AG04449 (cell line): ENCODE measurements at regions of chr11 and their contacts with region 1.

Region 1: DNA sequence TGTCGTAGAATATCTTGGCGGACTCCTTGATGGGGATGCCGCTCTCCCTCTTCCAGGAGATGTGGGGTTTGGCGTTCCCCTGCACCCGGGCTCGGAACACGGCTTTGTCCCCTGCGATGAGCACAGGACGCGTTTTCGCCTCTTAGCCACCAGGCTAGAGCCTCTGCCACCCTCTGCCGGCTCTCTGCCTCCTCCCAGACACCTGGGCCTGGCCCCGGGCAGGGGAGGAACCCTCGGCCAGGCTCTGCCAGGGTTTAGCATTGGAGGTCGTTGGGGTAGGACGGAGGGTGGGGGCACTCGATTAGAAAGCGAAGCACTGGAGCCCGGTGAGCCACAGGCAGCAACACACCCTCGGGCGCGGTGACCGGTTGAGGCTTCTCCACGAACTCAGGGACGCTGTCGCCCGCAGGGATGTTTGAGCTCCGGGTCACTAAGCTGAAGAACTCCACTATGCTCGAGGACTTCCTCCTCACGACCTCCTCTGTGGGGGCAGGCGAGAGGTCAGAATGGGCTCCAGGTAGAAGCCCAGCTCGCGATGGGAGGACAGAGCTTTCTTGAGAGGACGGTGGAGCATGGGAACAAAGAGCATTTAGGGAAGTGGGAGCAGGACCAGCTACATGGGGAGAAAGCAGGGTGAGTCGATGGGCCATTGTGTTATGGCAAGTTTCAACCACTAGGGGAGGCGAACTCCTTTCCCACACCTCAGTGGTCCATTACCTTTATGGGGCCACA is 4.3 kb downstream of the IGSF22 start:
- DNase-seq: no peak
- H3K4me3 ChIP-seq: peak overlapping the region; percentile 62
- CTCF ChIP-seq: peak; percentile 65

Region 2: DNA sequence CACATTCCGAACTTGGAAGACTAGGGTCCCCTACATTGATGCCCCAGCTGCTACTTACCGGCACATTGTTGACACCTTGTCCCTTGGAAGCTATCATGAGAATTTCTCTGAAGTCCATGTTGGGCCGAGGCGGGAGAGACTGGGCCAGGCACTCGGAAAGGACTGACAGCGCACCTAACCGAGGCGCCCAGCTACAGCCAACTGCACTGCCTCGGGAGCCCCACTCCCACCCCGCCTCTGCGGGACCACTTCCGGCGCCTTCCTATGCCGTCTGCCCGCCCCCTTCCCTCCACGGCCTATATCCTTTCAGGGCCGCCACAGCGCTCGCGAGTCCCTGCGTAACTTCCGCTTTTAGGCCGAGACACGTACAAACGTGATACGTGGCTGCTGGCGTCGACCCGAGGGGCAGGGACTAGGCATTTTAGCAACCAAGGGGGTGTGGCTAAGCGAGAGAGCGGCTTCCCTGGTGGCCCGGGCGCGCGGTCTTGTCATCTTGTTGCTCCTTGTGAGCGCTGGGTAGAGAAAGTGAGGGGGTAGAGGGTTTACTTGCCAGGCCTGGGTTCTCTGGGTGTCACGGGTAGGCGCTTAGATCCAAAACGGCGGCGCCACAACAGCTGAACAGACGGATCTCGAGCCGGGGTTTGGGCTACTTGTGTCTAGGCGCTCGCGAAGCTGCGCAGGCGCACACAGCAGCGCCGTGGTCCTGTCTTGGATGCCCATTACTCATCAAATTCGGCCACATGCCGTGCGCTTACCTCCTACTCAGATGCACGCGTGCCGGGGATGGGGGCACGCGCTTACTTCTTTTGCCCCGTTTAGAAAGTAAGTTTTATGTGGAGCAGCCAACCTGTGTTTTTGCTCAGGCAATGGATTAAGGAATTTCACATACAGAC is 87.3 kb before region 1 on chr11 and contains the start of gene SPTY2D1:
- CTCF ChIA-PET with region 1: interaction called, 10 read pairs
- POLR2A ChIA-PET with region 1: no interaction called
- DNase-seq: peak; percentile 96
- H3K4me3 ChIP-seq: peak within 1 kb of the TSS; percentile 91
- CTCF ChIP-seq: no peak

Region 3: DNA sequence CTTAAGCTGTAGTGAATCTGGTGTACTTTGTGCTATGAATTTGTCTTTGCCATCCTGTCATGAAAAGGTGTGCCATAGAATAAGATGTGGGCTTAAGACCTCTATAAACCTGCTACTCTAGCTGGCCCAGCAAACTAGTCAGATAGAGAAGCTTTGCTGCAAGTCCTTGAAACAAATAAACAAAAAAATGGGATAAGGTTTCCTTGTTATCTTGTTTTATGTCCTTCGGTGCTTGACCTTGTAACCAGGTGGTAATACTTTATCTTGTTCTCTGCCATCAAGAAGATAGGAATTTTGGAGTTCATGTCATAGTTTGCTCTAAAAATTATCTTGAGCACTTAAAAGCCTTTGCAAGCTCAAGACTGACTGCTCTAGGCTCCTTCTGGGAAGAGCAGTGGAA is 37.5 kb before region 1 on chr11:
- CTCF ChIA-PET with region 1: no interaction called
- POLR2A ChIA-PET with region 1: no interaction called
- DNase-seq: no peak
- H3K4me3 ChIP-seq: no peak overlapping the region
- CTCF ChIP-seq: no peak

Region 4: GRCh38 chr11:18706330-18707243 is 15.1 kb before region 1 on chr11:
- CTCF ChIA-PET with region 1: interaction called, 21 read pairs
- POLR2A ChIA-PET with region 1: no interaction called
- DNase-seq: no peak
- H3K4me3 ChIP-seq: peak overlapping the region; percentile 37
- CTCF ChIP-seq: no peak

Region 5: DNA sequence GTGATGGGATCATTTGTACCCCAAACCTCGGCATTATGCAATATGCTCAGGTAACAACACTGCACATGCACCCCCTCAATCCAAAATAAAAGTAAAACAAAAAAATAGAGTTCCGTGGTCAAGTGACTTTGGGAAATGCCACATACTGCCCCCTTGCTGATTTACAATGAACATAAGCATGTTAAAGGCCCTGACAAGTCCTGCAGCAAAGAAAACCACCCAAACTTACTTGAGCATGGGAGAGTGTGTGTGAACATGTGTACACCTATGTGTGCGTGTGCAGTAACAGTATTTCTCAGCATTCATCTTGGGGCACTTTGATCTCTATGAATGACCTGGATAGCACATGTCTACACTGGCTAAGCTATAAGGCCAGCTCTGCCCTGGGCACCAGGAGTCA is 20.1 kb after region 1 on chr11:
- CTCF ChIA-PET with region 1: interaction called, 132 read pairs
- POLR2A ChIA-PET with region 1: no interaction called
- DNase-seq: no peak
- H3K4me3 ChIP-seq: no peak overlapping the region
- CTCF ChIP-seq: no peak

Region 6: GRCh38 chr11:18780329-18780728 is 58.6 kb after region 1 on chr11:
- CTCF ChIA-PET with region 1: no interaction called
- POLR2A ChIA-PET with region 1: no interaction called
- DNase-seq: no peak
- H3K4me3 ChIP-seq: no peak overlapping the region
- CTCF ChIP-seq: no peak